Common myeloid progenitor, CD34-positive (primary cell): ENCODE measurements at regions of chr1 and their contacts with region 1.

Region 1: DNA sequence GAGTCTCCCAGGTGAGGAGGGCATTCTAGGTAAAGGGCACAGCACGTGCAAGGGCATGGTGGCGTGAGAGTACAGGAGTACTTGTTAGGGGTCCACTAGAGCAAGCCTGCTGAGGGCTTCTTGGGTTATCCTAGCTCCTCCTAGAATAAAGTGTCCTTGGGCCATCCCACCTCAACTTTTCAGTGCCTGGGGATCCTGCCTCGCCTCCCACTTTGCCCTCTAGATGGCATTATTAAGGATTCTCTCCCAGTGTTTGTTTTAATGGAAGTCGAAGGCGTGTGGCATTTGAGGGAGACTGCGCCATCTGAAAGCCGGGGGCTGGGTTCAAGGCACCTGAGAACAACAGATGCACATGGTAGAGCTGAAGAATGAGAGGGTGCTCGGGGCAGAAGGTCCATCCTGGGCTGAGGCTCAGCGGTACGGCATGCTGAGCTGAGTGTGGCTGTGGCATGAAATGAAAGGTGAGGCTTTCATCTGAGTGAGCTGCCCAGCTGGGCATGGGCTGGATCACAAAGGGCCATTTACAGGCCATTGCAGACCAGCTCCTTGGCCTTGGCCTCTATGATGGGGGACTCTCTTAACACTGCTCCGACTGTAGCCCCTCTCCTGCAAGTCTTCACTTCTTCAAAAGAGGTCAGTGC is 74.4 kb upstream of the SELENON start:
- DNase-seq: no peak
- H3K4me3 ChIP-seq: no peak overlapping the region
- H3K27ac ChIP-seq: no peak overlapping the region
- H3K4me1 ChIP-seq: peaks cover 0 to 11% (median 6%) of the 10 kb centered on the region in 4 experiments
- H3K27me3 ChIP-seq: no peaks in the 10 kb centered on the region

Region 2: DNA sequence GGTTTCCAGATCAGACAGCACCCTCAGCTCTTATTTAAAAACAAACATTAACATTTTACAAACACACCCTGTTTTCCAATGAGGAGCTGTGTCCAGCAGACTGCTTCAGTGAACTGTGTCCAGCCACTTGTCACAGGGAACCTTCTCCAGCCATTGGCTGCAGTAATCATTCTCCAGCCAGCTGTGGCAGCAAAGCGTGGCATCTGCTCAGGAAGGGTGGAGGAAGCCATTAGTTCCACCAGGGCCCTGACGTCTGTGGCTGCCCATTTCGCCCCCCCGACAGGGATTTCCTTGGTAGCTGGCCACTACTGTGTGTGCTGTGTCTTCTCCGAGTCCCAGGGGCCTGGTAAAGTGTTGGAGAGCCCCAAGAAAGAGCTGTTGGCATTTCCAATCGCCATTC is 11.5 kb after region 1 on chr1:
- CTCF ChIA-PET with region 1: interaction called, 11 read pairs
- POLR2A ChIA-PET with region 1: no interaction called
- DNase-seq: peak in 2 of 3 donors; percentile 50 to 51
- H3K4me3 ChIP-seq: no peak overlapping the region
- H3K27ac ChIP-seq: no peak overlapping the region
- H3K4me1 ChIP-seq: peaks cover 0 to 9% (median 6%) of the 10 kb centered on the region in 4 experiments
- H3K27me3 ChIP-seq: no peaks in the 10 kb centered on the region